ENCODE measurements at regions of chr22 and their contacts with region 1.

Region 1: DNA sequence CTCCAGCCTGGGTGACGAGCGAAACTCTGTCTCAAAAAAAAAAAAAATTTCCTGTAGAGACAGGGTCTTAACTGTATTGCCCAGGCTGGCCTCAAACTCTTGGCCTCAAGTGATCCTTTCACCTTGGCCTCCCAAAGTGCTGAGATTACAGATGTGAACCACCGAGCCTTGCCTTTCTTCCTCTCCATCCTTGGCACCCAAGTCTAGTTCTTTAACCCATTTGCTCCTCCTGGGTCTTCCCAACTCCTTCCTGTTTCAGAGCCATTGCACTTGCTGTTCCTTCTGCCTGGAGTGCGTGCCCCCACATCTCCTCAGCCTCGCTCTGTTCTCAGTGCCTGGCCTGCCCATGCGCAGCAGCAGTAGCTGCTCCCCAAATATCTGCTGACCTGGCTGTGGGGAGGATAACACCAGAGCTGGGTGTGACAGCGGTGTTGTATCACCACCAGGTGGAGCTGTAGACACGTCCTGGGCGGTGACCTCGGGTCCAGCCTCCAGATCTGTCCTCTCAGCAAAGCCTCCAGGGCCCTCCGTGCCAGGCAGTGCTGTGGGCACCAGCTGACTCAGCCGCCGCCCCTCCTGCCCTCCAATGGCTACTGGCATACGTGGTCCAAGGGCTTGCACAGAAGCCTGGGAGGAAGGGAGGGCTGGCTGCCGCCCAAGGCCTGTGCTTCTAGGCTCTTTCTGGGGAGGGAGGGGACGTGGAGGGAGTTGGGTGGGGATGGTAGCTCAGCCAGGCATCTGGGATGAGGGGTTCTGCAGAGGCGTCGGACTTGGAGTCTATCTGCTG is 22.0 kb downstream of the TEF start:
- DNase-seq: peak; percentile 63
- H3K4me3 ChIP-seq: no peak overlapping the region
- H3K27ac ChIP-seq: no peak overlapping the region
- H3K27me3 ChIP-seq: no peaks in the 10 kb centered on the region
- CTCF ChIP-seq: peak; percentile 92

Region 2: DNA sequence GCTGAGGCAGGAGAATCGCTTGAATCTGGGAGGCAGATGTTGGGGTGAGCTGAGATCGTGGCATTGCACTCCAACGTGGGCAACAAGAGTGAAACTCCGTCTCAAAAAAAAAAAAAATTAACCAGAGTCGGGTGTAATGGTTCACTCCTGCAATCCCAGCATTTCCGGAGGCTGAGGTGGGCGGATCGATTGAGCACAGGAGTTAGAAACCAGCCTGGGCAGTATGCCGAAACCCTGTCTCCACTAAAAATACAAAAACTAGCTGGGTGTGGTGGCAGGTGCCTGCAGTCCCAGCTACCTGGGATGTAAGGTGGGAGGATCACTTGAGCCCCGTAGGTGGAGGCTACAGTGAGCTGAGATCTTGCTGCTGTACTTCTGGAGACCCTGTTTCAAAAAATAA is 119.3 kb before region 1 on chr22:
- CTCF ChIA-PET with region 1: no interaction called
- POLR2A ChIA-PET with region 1: no interaction called
- DNase-seq: no peak
- H3K4me3 ChIP-seq: peak overlapping the region; percentile 83
- H3K27ac ChIP-seq: no peak overlapping the region
- H3K27me3 ChIP-seq: no peaks in the 10 kb centered on the region
- CTCF ChIP-seq: no peak

Region 3: DNA sequence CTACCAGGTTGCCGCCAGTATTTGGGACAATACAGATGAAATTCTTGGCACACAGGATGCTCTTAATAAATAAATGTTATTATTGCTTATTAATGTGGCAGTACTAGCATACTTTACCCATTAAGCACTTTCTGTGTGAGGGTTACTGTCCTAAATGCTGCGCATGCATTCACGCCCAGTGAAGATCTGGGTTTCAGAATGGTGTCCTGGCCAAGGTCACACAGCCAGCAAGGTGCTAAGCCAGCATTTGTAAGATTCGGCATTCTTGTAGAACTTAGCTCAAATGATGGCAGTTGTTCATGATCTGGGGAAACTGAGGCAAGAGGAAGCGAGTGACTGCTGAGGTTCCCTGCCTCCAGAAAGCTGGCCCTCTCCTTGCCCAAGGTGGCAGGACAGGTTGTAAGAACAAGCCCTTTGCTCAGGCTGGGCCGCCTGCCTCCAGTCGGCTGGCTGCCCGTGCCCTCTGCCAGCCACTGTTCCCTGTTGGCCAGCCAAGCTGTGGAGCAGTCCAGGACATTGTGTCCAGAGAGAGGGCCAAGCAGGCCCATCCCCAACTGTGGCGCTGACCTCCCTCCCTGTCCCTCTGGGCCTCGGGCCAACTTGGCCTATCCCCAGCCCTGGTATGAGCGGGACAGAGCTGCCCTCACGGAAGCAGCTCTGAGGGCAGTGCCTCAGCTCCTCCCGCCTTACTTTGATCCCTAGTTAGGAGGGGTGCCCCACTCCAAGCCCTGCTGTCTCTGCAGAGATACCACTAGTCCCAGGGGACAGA is 14.1 kb after region 1 on chr22:
- CTCF ChIA-PET with region 1: interaction called, 10 read pairs
- POLR2A ChIA-PET with region 1: no interaction called
- DNase-seq: no peak
- H3K4me3 ChIP-seq: no peak overlapping the region
- H3K27ac ChIP-seq: no peak overlapping the region
- H3K27me3 ChIP-seq: no peaks in the 10 kb centered on the region
- CTCF ChIP-seq: no peak

Region 4: GRCh38 chr22:41468381-41469217 is 64.9 kb after region 1 on chr22 and contains the starts of genes ACO2 and PHF5A:
- CTCF ChIA-PET with region 1: interaction called, 3 read pairs
- POLR2A ChIA-PET with region 1: interaction called, 11 read pairs
- DNase-seq: peak; percentile 93
- H3K4me3 ChIP-seq: peak within 1 kb of the TSS; percentile 98
- H3K27ac ChIP-seq: peak within 1 kb of the TSS; percentile 86
- H3K27me3 ChIP-seq: no peaks in the 10 kb centered on the region
- CTCF ChIP-seq: no peak
- polyA plus RNA-seq, gene ACO2: 32.2 and 44.4 TPM in 2 replicates
- polyA plus RNA-seq, gene PHF5A: 47.9 and 53.8 TPM in 2 replicates

Region 5: GRCh38 chr22:41526837-41527799 is 123.4 kb after region 1 on chr22:
- CTCF ChIA-PET with region 1: interaction called, 46 read pairs
- POLR2A ChIA-PET with region 1: interaction called, 5 read pairs
- DNase-seq: no peak
- H3K4me3 ChIP-seq: no peak overlapping the region
- H3K27ac ChIP-seq: peak overlapping the region; percentile 31
- H3K27me3 ChIP-seq: no peaks in the 10 kb centered on the region
- CTCF ChIP-seq: peak; percentile 86

Region 6: DNA sequence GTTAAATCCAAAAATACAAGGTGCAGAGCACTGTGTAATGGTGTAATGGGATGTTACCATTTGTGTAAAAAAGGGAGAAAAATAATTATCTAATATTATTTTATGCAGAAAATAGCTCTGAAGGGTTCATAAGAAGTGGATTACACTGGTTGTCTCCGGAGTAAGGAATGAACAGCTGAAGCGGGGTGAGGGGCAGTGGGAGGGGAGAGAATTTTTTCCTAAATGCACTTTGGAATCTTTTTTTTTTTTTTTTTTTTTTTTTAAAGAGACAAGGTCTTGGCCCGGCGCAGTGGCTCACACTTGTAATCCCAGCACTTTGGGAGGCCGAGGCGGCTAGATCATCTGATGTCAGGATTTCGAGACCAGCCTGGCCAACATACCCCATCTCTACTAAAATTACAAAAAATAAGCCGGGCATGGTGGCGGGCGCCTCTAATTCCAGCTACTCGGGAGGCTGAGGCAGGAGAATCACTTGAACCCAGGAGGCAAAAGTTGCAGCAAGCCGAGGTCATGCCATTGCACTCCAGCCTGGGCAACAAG is 147.3 kb after region 1 on chr22:
- CTCF ChIA-PET with region 1: interaction called, 14 read pairs
- POLR2A ChIA-PET with region 1: no interaction called
- DNase-seq: no peak
- H3K4me3 ChIP-seq: no peak overlapping the region
- H3K27ac ChIP-seq: no peak overlapping the region
- H3K27me3 ChIP-seq: no peaks in the 10 kb centered on the region
- CTCF ChIP-seq: no peak